CD8-positive, alpha-beta T cell (primary cell): ENCODE measurements at regions of chr7 and their contacts with region 1.

Region 1: GRCh38 chr7:129611246-129612111 is at the start of gene NRF1:
- DNase-seq: peak; percentile 82 to 97 (median 91)
- ATAC-seq: peak; percentile 87
- H3K4me3 ChIP-seq: peak within 1 kb of the TSS; percentile 87 to 91
- H3K4me3 Mint-ChIP-seq: peak within 1 kb of the TSS; percentile 97
- H3K27ac ChIP-seq: peak within 1 kb of the TSS; percentile 68 to 85
- H3K27ac Mint-ChIP-seq: peak within 1 kb of the TSS; percentile 96
- H3K4me1 ChIP-seq: peaks cover 40% of the 10 kb centered on the region
- H3K4me1 Mint-ChIP-seq: peaks cover 67% of the 10 kb centered on the region
- H3K27me3 ChIP-seq: no peaks in the 10 kb centered on the region
- H3K27me3 Mint-ChIP-seq: no peaks in the 10 kb centered on the region
- CTCF ChIP-seq: no peak
- total RNA-seq, gene NRF1: 31.9 to 34.9 TPM

Region 2: DNA sequence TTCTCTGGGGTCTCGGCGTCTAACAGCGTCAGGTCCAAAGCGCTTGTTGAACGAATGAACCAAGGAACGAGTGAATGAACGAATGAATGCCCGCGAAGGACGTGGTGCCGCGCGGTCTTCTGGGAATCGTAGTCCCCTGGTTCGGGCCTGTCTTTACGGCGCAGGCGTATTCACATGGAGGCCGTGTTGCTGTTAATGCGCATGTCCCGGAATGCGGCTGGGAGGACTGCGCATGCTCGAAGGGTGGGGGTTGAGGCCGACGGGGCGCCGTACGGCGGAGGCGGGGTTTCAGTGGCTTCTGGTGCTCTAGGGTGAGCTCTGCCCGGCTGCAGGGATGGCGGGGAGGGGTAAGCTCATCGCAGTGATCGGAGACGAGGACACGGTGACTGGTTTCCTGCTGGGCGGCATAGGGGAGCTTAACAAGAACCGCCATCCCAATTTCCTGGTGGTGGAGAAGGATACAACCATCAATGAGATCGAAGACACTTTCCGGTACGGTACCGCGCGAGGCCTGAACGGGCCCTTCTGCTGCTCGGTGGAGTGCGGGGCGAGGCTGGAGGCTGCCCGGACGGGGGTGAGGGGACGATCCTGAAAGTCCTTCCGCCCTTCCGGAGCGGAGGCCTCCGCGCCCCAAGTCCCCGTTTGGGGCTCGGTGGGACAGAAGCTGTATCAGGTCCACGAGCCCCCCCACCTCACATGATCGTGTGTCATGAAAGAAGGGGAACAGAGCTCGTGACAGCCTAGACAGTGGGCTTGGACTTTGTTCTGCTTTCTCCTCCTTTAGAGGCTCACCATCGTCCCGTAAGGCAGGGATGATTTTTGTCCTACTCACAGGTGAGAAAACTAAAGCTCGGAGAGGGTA is 748.7 kb before region 1 on chr7 and contains the start of gene ATP6V1F:
- CTCF ChIA-PET with region 1: no interaction called
- POLR2A ChIA-PET with region 1: no interaction called
- intact Hi-C with region 1: loop called (anchors 5 to 10 kb)
- DNase-seq: peak; percentile 97 to 100 (median 99)
- ATAC-seq: peak; percentile 87
- H3K4me3 ChIP-seq: peak within 1 kb of the TSS; percentile 80 to 92
- H3K4me3 Mint-ChIP-seq: peak within 1 kb of the TSS; percentile 96
- H3K27ac ChIP-seq: peak within 1 kb of the TSS; percentile 71 to 74
- H3K27ac Mint-ChIP-seq: peak within 1 kb of the TSS; percentile 94
- H3K4me1 ChIP-seq: peaks cover 17% of the 10 kb centered on the region
- H3K4me1 Mint-ChIP-seq: peaks cover 34% of the 10 kb centered on the region
- H3K27me3 ChIP-seq: no peaks in the 10 kb centered on the region
- H3K27me3 Mint-ChIP-seq: no peaks in the 10 kb centered on the region
- CTCF ChIP-seq: no peak
- total RNA-seq, gene ATP6V1F: 54.8 to 59.3 TPM

Region 3: DNA sequence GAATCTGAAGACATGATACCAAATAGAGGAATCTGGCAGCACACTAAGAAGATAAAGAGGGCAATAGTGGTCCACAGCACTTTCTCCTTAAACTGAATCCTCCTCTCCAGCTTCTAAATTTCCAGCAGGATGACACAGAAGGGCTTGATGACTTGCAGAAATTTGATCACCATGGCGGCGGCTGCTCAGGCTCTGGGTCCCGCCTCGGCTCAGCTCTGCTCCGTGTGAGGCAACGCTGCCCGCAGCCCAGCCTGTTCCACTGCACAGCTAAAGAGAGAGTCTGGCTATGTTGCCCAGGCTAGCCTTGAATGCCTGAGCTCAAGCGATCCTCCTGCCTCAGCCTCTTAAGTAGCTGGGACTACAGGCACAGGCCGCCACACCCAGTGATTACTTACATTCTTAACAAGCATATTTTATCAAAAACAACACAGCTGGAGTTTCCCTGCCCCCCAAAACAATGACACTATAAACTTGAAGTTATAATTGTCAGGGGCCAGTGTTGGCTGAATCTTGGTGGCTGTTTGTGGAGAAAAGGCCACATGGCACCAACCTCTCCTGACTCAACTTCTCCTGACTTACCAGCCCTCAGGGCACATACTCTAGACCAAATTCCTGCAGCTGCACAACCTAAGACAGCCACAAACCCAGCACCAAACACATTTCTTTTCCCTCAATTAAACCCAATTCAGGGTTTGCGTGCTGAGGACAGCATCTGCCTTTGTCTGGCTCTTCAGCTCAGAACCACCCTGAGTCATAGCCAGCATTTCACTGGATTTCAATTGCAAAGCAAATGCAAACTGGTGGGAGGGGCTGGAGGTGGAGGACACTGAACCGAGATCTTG is 545.0 kb before region 1 on chr7:
- CTCF ChIA-PET with region 1: no interaction called
- POLR2A ChIA-PET with region 1: no interaction called
- intact Hi-C with region 1: no loop called
- DNase-seq: no peak
- ATAC-seq: no peak
- H3K4me3 ChIP-seq: no peak overlapping the region
- H3K4me3 Mint-ChIP-seq: no peak overlapping the region
- H3K27ac ChIP-seq: no peak overlapping the region
- H3K27ac Mint-ChIP-seq: no peak overlapping the region
- H3K4me1 ChIP-seq: no peaks in the 10 kb centered on the region
- H3K4me1 Mint-ChIP-seq: no peaks in the 10 kb centered on the region
- H3K27me3 ChIP-seq: no peaks in the 10 kb centered on the region
- H3K27me3 Mint-ChIP-seq: peaks cover 10% of the 10 kb centered on the region
- CTCF ChIP-seq: no peak

Region 4: GRCh38 chr7:129502376-129502776 is 109.1 kb before region 1 on chr7 and contains the start of gene SMKR1:
- CTCF ChIA-PET with region 1: interaction called, 4 read pairs
- POLR2A ChIA-PET with region 1: interaction called, 8 read pairs
- intact Hi-C with region 1: loop called (anchors 1 kb)
- DNase-seq: peak; percentile 85 to 98 (median 93)
- ATAC-seq: peak; percentile 95
- H3K4me3 ChIP-seq: peak within 1 kb of the TSS; percentile 63 to 71
- H3K4me3 Mint-ChIP-seq: peak within 1 kb of the TSS; percentile 79
- H3K27ac ChIP-seq: peak within 1 kb of the TSS; percentile 64 to 75
- H3K27ac Mint-ChIP-seq: peak within 1 kb of the TSS; percentile 86
- H3K4me1 ChIP-seq: peaks cover 13% of the 10 kb centered on the region
- H3K4me1 Mint-ChIP-seq: peaks cover 17% of the 10 kb centered on the region
- H3K27me3 ChIP-seq: no peaks in the 10 kb centered on the region
- H3K27me3 Mint-ChIP-seq: no peaks in the 10 kb centered on the region
- CTCF ChIP-seq: no peak
- total RNA-seq, gene SMKR1: 0.56 to 0.68 TPM

Region 5: DNA sequence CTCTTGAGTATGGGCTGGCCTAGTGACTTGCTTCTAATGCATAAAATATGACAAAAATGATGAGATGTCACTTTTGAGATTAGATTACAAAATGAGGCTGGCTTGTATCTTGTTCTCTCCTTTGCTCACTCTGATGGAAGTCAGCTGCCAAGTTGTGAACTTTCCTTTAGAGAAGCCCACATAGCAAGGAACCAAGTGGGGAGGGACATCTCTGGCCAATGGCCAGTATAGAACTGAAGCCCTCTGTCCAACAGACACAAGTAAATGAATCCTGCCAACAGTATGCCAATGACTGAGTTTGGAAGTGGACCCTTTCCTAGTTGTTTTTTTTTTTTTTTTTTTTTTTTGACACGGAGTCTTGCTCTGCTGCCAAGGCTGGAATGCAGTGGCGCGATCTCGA is 436.3 kb after region 1 on chr7:
- CTCF ChIA-PET with region 1: no interaction called
- POLR2A ChIA-PET with region 1: no interaction called
- intact Hi-C with region 1: loop called (anchors 1 to 5 kb)
- DNase-seq: no peak
- ATAC-seq: no peak
- H3K4me3 ChIP-seq: no peak overlapping the region
- H3K4me3 Mint-ChIP-seq: no peak overlapping the region
- H3K27ac ChIP-seq: no peak overlapping the region
- H3K27ac Mint-ChIP-seq: no peak overlapping the region
- H3K4me1 ChIP-seq: peaks cover 3% of the 10 kb centered on the region
- H3K4me1 Mint-ChIP-seq: peaks cover 14% of the 10 kb centered on the region
- H3K27me3 ChIP-seq: no peaks in the 10 kb centered on the region
- H3K27me3 Mint-ChIP-seq: no peaks in the 10 kb centered on the region
- CTCF ChIP-seq: no peak